Transverse colon (tissue), 4 donors: ENCODE measurements at regions of chr13 and their contacts with region 1.

Region 1: GRCh38 chr13:72097568-72097967 is 230.6 kb upstream of the DACH1 start:
- DNase-seq: no peak
- H3K4me3 ChIP-seq: no peak overlapping the region
- H3K27ac ChIP-seq: no peak overlapping the region
- H3K4me1 ChIP-seq: no peaks in the 10 kb centered on the region
- H3K27me3 ChIP-seq: no peaks in the 10 kb centered on the region
- CTCF ChIP-seq: no peak
- EP300 ChIP-seq: no peak
- POLR2A ChIP-seq: no peak

Region 2: GRCh38 chr13:70125693-70126092 is 1971.9 kb before region 1 on chr13:
- in situ Hi-C with region 1: no loop called
- intact Hi-C with region 1: loop called (anchors 10 kb)
- DNase-seq: no peak
- H3K4me3 ChIP-seq: no peak overlapping the region
- H3K27ac ChIP-seq: no peak overlapping the region
- H3K4me1 ChIP-seq: no peaks in the 10 kb centered on the region
- H3K27me3 ChIP-seq: no peaks in the 10 kb centered on the region
- CTCF ChIP-seq: no peak
- EP300 ChIP-seq: no peak
- POLR2A ChIP-seq: no peak

Region 3: GRCh38 chr13:72342364-72342763 is 244.8 kb after region 1 on chr13:
- in situ Hi-C with region 1: no loop called
- intact Hi-C with region 1: no loop called
- DNase-seq: no peak
- H3K4me3 ChIP-seq: no peak overlapping the region
- H3K27ac ChIP-seq: no peak overlapping the region
- H3K4me1 ChIP-seq: no peaks in the 10 kb centered on the region
- H3K27me3 ChIP-seq: no peaks in the 10 kb centered on the region
- CTCF ChIP-seq: no peak
- EP300 ChIP-seq: no peak
- POLR2A ChIP-seq: no peak